Activated CD4-positive, alpha-beta memory T cell treated with anti-CD3 and anti-CD28 coated beads for 36 hours (primary cell): ENCODE measurements at regions of chr11 and their contacts with region 1.

Region 1: GRCh38 chr11:60831143-60831500 is 10.8 kb upstream of the CCDC86 start:
- DNase-seq: peak; percentile 87
- H3K4me3 Mint-ChIP-seq: no peak overlapping the region
- H3K27ac Mint-ChIP-seq: no peak overlapping the region
- H3K4me1 Mint-ChIP-seq: peaks cover 10% of the 10 kb centered on the region
- H3K27me3 Mint-ChIP-seq: peaks cover 13% of the 10 kb centered on the region

Region 2: GRCh38 chr11:60775420-60775961 is 55.6 kb before region 1 on chr11:
- CTCF ChIA-PET with region 1: interaction called, 6 read pairs
- POLR2A ChIA-PET with region 1: no interaction called
- intact Hi-C with region 1: loop called (anchors 2 kb)
- DNase-seq: peak; percentile 89
- H3K4me3 Mint-ChIP-seq: no peak overlapping the region
- H3K27ac Mint-ChIP-seq: no peak overlapping the region
- H3K4me1 Mint-ChIP-seq: peaks cover 10% of the 10 kb centered on the region
- H3K27me3 Mint-ChIP-seq: peaks cover 4% of the 10 kb centered on the region

Region 3: DNA sequence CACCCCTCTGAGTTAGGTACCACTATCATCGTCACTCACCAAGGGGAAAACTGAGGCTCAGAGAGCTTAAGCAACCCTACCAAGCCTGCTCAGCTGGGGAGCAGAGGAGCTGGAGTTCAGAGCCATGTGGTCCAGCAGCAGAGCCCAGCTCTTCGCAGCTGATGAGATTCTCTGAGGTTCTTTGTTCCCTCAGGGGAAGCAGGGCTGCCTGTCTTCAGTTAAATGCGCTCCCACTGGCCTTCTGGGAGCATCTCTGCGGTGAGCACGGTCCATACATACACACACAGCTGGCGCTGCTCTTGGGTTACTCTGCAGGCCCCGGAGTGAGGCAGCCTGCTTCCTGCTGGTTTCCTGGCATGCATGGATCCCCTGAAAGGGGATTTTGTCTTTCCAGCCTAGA is 29.8 kb after region 1 on chr11:
- CTCF ChIA-PET with region 1: interaction called, 12 read pairs
- POLR2A ChIA-PET with region 1: no interaction called
- intact Hi-C with region 1: no loop called
- DNase-seq: no peak
- H3K4me3 Mint-ChIP-seq: no peak overlapping the region
- H3K27ac Mint-ChIP-seq: no peak overlapping the region
- H3K4me1 Mint-ChIP-seq: peaks cover 15% of the 10 kb centered on the region
- H3K27me3 Mint-ChIP-seq: no peaks in the 10 kb centered on the region

Region 4: GRCh38 chr11:60887556-60887955 is 56.4 kb after region 1 on chr11:
- CTCF ChIA-PET with region 1: interaction called, 100 read pairs
- POLR2A ChIA-PET with region 1: no interaction called
- intact Hi-C with region 1: loop called (anchors 1 kb)
- DNase-seq: peak; percentile 47
- H3K4me3 Mint-ChIP-seq: no peak overlapping the region
- H3K27ac Mint-ChIP-seq: no peak overlapping the region
- H3K4me1 Mint-ChIP-seq: no peaks in the 10 kb centered on the region
- H3K27me3 Mint-ChIP-seq: no peaks in the 10 kb centered on the region

Region 5: GRCh38 chr11:60906132-60906972 is 75.2 kb after region 1 on chr11 and contains the start of gene PRPF19:
- CTCF ChIA-PET with region 1: interaction called, 117 read pairs
- POLR2A ChIA-PET with region 1: interaction called, 3 read pairs
- intact Hi-C with region 1: no loop called
- DNase-seq: peak; percentile 100
- H3K4me3 Mint-ChIP-seq: peak within 1 kb of the TSS; percentile 90
- H3K27ac Mint-ChIP-seq: peak within 1 kb of the TSS; percentile 94
- H3K4me1 Mint-ChIP-seq: peaks cover 36% of the 10 kb centered on the region
- H3K27me3 Mint-ChIP-seq: no peaks in the 10 kb centered on the region
- total RNA-seq, gene PRPF19: 127 to 139 TPM

Region 6: DNA sequence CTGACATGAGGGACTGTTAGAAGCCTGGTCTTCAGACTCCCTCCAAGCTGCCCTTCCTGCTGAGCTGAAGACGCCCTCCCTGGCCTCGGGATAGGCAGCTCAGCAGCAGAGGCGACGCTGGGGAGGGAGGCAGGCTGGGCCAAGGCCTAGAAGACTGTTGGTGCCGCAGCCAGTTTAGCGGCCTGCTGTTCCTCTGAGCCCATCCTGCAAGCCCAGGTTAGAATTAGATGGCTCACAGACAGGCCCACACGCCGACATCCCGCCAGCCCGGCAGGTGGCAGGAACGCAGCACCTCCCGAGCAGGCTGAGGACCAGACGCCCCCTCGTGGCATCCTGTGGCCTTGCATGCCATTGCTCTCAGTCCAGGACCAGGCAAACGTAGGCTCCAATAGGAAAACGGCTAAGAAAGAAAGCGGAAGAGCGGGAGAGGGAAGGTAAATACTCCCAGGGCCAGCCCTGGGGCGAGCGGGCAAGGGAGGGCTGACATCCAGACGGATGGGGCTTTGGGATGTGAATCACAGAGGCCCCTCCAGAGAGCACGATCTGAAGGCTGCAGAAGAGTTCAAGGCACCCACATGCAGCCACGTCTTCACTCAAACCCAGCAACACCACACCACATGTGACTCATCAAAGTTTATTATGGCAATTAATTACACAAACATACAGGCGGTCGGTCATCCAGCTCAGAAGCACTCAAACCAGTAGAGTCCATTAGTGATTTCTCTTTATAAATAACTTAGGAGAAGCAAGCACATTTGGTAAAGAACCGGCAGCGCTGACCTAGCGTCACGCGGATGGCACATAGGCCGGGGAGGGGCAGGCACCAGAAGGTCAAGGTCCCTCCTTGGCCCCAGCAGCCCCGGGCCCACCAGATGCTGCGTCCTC is 298.8 kb after region 1 on chr11:
- CTCF ChIA-PET with region 1: interaction called, 14 read pairs
- POLR2A ChIA-PET with region 1: no interaction called
- intact Hi-C with region 1: no loop called
- DNase-seq: peak; percentile 95
- H3K4me3 Mint-ChIP-seq: peak overlapping the region; percentile 17
- H3K27ac Mint-ChIP-seq: peak overlapping the region; percentile 57
- H3K4me1 Mint-ChIP-seq: peaks cover 25% of the 10 kb centered on the region
- H3K27me3 Mint-ChIP-seq: no peaks in the 10 kb centered on the region

Region 7: DNA sequence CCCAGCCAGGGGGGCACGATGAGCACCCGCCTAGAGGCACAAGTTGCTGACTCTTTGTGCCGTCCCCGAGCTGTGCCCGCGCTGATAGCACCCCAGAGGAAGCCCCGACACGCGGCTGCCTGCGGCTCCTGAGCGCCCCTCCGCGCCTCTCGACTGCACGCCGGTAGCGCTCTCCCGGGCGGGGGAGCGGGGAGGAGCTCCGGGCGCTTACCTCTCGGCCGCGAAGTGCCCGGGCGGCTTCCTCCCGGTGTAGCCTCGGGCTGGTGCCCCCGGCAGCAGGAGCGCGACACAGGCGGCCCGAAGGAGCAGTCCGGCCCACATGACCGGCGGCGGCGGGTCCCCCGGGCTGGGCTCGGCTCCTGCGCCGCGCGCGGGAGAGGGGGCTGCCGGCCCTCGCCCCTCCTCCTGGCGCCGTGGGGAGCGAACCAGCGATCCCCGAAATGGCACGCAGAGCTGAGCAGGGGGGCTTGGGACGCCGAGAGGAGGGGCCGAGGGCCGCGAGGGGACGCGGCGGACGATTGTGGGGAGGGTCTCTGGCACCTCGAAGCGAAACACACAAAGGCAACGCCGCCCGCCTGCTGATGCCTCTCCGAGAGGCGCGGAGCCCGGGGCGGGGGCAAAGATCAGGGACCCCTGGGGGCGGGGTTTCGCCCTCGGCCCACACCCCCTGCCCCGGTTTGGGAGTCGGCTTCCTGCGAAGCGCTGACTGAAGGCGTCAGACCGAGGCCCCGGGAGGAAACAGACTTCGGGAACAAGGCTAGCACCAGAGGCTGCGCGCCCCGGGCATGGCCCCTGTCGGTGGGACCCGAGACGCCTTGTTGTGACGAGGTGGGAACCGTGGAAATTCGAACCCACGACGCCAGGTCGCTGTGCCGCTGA is 463.8 kb after region 1 on chr11 and contains the start of gene VWCE:
- CTCF ChIA-PET with region 1: interaction called, 17 read pairs
- POLR2A ChIA-PET with region 1: no interaction called
- intact Hi-C with region 1: no loop called
- DNase-seq: peak; percentile 81
- H3K4me3 Mint-ChIP-seq: peak within 1 kb of the TSS; percentile 72
- H3K27ac Mint-ChIP-seq: no peak within 1 kb of the TSS
- H3K4me1 Mint-ChIP-seq: peaks cover 32% of the 10 kb centered on the region
- H3K27me3 Mint-ChIP-seq: peaks cover 19% of the 10 kb centered on the region
- total RNA-seq, gene VWCE: 1.1 to 1.4 TPM